Activated CD8-positive, alpha-beta T cell treated with anti-CD3 and anti-CD28 coated beads for 36 hours (primary cell): ENCODE measurements at regions of chr12 and their contacts with region 1.

Region 1: DNA sequence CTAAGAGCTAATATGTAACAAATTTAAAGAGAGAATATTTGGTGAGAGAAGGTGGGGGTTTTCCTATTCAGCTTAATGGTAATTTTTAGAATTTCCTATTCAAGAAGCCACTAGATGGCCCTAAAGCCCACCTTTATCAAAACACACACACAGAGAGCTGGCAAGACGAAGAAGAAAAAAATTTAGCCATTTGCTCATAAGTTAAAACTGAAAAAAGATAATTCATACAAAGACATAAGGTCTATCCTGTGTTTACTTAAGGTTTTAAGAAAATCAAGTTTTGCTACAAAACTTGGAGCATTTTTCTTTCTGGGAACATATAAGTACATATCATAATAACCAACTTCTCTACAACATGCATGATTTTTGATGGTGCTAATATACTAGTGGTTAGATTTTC is 46.8 kb upstream of the PCED1B start:
- DNase-seq: peak; percentile 12
- ATAC-seq: peak; percentile 81
- H3K4me3 Mint-ChIP-seq: no peak overlapping the region
- H3K27ac Mint-ChIP-seq: peak overlapping the region; percentile 10
- H3K4me1 Mint-ChIP-seq: peaks cover 37% of the 10 kb centered on the region
- H3K27me3 Mint-ChIP-seq: no peaks in the 10 kb centered on the region
- CTCF ChIP-seq: peak; percentile 84

Region 2: GRCh38 chr12:47021298-47021697 is 11.3 kb before region 1 on chr12:
- CTCF ChIA-PET with region 1: interaction called, 24 read pairs
- POLR2A ChIA-PET with region 1: no interaction called
- intact Hi-C with region 1: no loop called
- DNase-seq: peak; percentile 16
- ATAC-seq: peak; percentile 70
- H3K4me3 Mint-ChIP-seq: no peak overlapping the region
- H3K27ac Mint-ChIP-seq: no peak overlapping the region
- H3K4me1 Mint-ChIP-seq: peaks cover 4% of the 10 kb centered on the region
- H3K27me3 Mint-ChIP-seq: peaks cover 10% of the 10 kb centered on the region
- CTCF ChIP-seq: peak; percentile 81

Region 3: GRCh38 chr12:47071241-47071852 is 38.7 kb after region 1 on chr12:
- CTCF ChIA-PET with region 1: interaction called, 60 read pairs
- POLR2A ChIA-PET with region 1: no interaction called
- intact Hi-C with region 1: loop called (anchors 5 kb)
- DNase-seq: no peak
- ATAC-seq: no peak
- H3K4me3 Mint-ChIP-seq: no peak overlapping the region
- H3K27ac Mint-ChIP-seq: no peak overlapping the region
- H3K4me1 Mint-ChIP-seq: peaks cover 24% of the 10 kb centered on the region
- H3K27me3 Mint-ChIP-seq: no peaks in the 10 kb centered on the region
- CTCF ChIP-seq: peak; percentile 76

Region 4: DNA sequence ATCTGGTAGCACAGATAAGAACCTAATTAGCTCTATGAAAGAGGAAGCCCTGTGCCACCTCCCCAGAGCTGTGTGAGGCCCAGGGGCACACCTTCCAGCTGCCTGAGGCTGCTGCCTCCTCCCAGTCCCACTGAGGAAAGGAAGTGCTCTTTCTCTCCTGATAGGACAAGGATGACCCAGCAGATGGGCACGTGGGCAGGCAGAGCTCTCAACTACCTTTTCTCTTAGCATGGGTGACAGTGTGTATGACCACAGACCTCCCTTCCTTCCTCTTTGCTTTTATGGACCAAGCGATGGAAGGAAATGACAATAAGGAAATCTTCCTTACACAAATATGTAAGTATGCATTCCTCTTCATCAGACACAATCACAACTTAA is 174.7 kb after region 1 on chr12:
- CTCF ChIA-PET with region 1: interaction called, 11 read pairs
- POLR2A ChIA-PET with region 1: interaction called, 4 read pairs
- intact Hi-C with region 1: loop called (anchors 5 kb)
- DNase-seq: peak; percentile 76
- ATAC-seq: peak; percentile 60
- H3K4me3 Mint-ChIP-seq: peak overlapping the region; percentile 79
- H3K27ac Mint-ChIP-seq: peak overlapping the region; percentile 96
- H3K4me1 Mint-ChIP-seq: peaks cover 69% of the 10 kb centered on the region
- H3K27me3 Mint-ChIP-seq: no peaks in the 10 kb centered on the region
- CTCF ChIP-seq: no peak

Region 5: DNA sequence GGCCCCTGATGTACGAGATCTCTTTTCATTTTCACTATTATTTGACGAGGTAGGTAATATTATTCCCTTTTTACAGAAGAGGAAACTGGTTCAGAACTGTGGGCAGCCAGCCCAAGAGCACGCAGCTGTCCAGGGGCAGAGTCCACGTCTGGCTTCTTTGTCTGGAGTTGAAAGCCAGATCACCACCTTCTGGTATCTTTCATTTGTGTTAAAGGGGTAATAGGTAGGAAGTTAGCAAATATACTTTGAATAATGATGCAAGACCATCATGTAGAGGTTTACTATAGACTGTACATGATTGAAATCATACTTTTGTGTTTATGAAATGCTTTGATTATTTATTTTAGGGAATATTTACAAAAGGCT is 191.2 kb after region 1 on chr12:
- CTCF ChIA-PET with region 1: interaction called, 10 read pairs
- POLR2A ChIA-PET with region 1: no interaction called
- intact Hi-C with region 1: no loop called
- DNase-seq: no peak
- ATAC-seq: no peak
- H3K4me3 Mint-ChIP-seq: peak overlapping the region; percentile 74
- H3K27ac Mint-ChIP-seq: peak overlapping the region; percentile 88
- H3K4me1 Mint-ChIP-seq: peaks cover 73% of the 10 kb centered on the region
- H3K27me3 Mint-ChIP-seq: no peaks in the 10 kb centered on the region
- CTCF ChIP-seq: no peak

Region 6: GRCh38 chr12:47403681-47404080 is 371.0 kb after region 1 on chr12:
- CTCF ChIA-PET with region 1: interaction called, 44 read pairs
- POLR2A ChIA-PET with region 1: no interaction called
- intact Hi-C with region 1: loop called (anchors 5 kb)
- DNase-seq: no peak
- ATAC-seq: no peak
- H3K4me3 Mint-ChIP-seq: no peak overlapping the region
- H3K27ac Mint-ChIP-seq: no peak overlapping the region
- H3K4me1 Mint-ChIP-seq: peaks cover 71% of the 10 kb centered on the region
- H3K27me3 Mint-ChIP-seq: no peaks in the 10 kb centered on the region
- CTCF ChIP-seq: no peak

Region 7: GRCh38 chr12:47651368-47652254 is 619.0 kb after region 1 on chr12:
- CTCF ChIA-PET with region 1: interaction called, 6 read pairs
- POLR2A ChIA-PET with region 1: no interaction called
- intact Hi-C with region 1: loop called (anchors 10 kb)
- DNase-seq: peak; percentile 62
- ATAC-seq: peak; percentile 98
- H3K4me3 Mint-ChIP-seq: no peak overlapping the region
- H3K27ac Mint-ChIP-seq: no peak overlapping the region
- H3K4me1 Mint-ChIP-seq: peaks cover 12% of the 10 kb centered on the region
- H3K27me3 Mint-ChIP-seq: no peaks in the 10 kb centered on the region
- CTCF ChIP-seq: peak; percentile 81